ENCODE measurements at regions of chr14 and their contacts with region 1.

Region 1: DNA sequence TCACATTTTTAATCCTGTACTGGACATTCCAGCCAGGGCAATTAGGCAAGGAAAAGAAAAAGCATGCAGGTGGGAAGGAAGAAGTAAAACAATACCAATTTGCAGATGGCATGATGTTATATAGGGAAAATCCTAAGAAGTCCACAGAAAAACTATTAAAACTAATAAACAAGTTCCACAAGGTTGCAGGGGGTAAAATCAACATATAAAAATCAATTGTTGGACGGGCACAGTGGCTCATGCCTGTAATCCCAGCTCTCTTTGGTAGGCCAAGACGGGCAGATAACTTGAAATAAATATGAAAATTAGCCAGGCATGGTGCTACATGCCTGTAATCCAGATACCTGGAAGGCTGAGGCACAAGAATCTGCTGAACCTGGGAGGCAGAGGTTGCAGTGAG is 31.9 kb downstream of the SEC23A start:
- DNase-seq: no peak
- H3K4me3 ChIP-seq: no peak overlapping the region
- H3K27ac ChIP-seq: no peak overlapping the region
- H3K27me3 ChIP-seq: no peaks in the 10 kb centered on the region
- CTCF ChIP-seq: no peak

Region 2: DNA sequence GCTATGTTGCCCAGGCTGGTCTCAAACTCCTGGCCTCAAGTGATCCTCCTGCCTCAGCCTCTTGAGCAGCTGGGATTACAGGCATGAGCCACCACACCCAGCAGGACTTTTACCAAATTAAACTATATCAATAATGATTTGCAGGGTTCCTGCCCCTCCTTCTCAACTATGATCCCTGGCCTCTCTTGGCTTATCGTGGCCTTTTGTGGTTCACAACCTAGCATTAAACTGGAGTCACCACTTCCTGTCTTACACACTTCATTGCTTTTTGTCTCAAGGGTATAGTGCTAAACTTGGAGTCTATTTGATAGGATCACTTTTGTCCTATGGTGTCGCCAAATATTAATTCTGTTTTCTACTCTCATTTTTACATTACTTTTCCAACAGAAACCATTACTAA is 32.6 kb before region 1 on chr14:
- intact Hi-C with region 1: no loop called
- DNase-seq: no peak
- H3K4me3 ChIP-seq: no peak overlapping the region
- H3K27ac ChIP-seq: no peak overlapping the region
- H3K27me3 ChIP-seq: no peaks in the 10 kb centered on the region
- CTCF ChIP-seq: no peak

Region 3: DNA sequence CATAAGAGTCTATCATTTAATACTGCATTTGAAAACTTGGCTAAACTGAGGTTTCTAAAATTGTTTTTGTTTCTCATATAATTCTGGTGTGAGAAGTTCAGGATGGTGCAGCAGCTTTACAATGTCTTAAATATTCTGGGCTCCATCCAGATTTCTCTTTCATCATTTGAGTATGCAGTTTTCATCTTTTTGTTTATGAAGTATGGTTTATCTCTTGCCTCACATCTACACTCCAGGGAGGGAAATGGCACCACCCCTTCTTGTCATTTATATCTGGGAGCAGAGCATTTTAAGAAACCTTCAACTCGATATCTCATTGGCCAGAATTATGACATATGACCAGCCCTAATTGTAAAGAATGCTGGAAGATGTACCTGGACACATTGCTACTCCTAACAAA is 67.3 kb after region 1 on chr14:
- intact Hi-C with region 1: loop called in 1 of 2 experiments (anchors 2 kb)
- DNase-seq: no peak
- H3K4me3 ChIP-seq: no peak overlapping the region
- H3K27ac ChIP-seq: no peak overlapping the region
- H3K27me3 ChIP-seq: no peaks in the 10 kb centered on the region
- CTCF ChIP-seq: no peak